ENCODE measurements at regions of chr2 and their contacts with region 1.

Region 1: GRCh38 chr2:128321784-128322714 is 3.4 kb upstream of the HS6ST1 start:
- DNase-seq: peak; percentile 69 to 83 (median 78)
- H3K4me3 ChIP-seq: peak overlapping the region in 1 of 2 donors; percentile 58
- H3K4me3 Mint-ChIP-seq: peak overlapping the region; percentile 65 to 82 (median 76)
- H3K27ac ChIP-seq: peak overlapping the region; percentile 30
- H3K27ac Mint-ChIP-seq: peak overlapping the region in 4 of 7 donors; percentile 69 to 90 (median 77)
- H3K4me1 ChIP-seq: peaks cover 19% of the 10 kb centered on the region
- H3K4me1 Mint-ChIP-seq: peaks cover 6 to 21% (median 14%) of the 10 kb centered on the region in 4 donors
- H3K27me3 ChIP-seq: no peaks in the 10 kb centered on the region
- H3K27me3 Mint-ChIP-seq: no peaks in the 10 kb centered on the region

Region 2: GRCh38 chr2:128090945-128091725 is 230.9 kb before region 1 on chr2 and contains the start of gene UGGT1:
- CTCF ChIA-PET with region 1: no interaction called
- POLR2A ChIA-PET with region 1: no interaction called
- intact Hi-C with region 1: loop called (anchors 10 kb)
- DNase-seq: peak; percentile 91 to 95 (median 93)
- H3K4me3 ChIP-seq: peak within 1 kb of the TSS; percentile 86 to 98
- H3K4me3 Mint-ChIP-seq: peak within 1 kb of the TSS; percentile 88 to 98 (median 93)
- H3K27ac ChIP-seq: peak within 1 kb of the TSS; percentile 81
- H3K27ac Mint-ChIP-seq: peak within 1 kb of the TSS; percentile 90 to 98 (median 96)
- H3K4me1 ChIP-seq: peaks cover 33% of the 10 kb centered on the region
- H3K4me1 Mint-ChIP-seq: peaks cover 27 to 61% (median 40%) of the 10 kb centered on the region in 4 donors
- H3K27me3 ChIP-seq: no peaks in the 10 kb centered on the region
- H3K27me3 Mint-ChIP-seq: no peaks in the 10 kb centered on the region
- total RNA-seq, gene UGGT1: 56.8 to 60.2 TPM

Region 3: DNA sequence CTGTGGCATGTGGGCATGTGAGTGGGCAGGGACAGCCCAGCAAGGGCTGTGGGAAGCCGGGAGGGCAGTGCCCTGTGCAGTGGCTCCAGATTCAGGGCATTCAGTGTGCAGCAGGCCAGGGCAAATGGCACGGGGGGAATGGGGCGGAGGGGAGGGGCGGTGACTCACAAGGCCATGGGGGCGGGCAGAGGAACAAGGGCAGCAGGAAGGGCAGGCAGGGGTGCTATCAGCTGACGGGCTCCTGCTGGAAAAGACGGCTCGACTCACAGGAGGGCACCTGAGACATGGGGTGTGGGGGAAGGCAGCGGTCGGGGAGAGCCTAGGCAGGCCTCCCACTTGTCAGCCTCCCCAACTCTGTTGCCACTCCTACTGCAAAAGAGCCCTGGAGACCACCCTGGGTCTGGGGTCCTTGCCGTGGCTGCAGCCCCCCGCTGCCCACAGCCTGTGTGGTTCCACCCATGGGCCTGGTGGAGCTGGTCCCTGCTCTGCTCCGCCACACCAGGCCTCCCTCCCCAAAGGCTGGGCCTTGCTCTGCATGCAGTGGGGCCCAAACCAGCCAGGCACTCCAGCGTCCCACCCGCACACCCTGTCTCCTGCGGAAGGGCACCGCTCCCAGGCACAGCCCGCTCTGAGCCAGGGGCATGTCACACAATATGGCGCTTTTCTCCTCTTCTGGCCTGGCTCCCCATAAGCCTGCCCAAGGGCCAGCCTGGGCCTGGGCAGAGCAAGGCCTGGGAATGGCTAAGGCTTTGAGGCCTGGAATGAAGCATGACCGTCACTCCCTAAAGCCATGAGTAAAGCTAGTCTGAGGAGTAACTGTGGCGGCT is 29.2 kb before region 1 on chr2:
- CTCF ChIA-PET with region 1: no interaction called
- POLR2A ChIA-PET with region 1: no interaction called
- intact Hi-C with region 1: no loop called
- DNase-seq: peak in 1 of 5 donors; percentile 19
- H3K4me3 ChIP-seq: no peak overlapping the region
- H3K4me3 Mint-ChIP-seq: no peak overlapping the region
- H3K27ac ChIP-seq: no peak overlapping the region
- H3K27ac Mint-ChIP-seq: peak overlapping the region in 1 of 7 donors; percentile 12
- H3K4me1 ChIP-seq: no peaks in the 10 kb centered on the region
- H3K4me1 Mint-ChIP-seq: peaks cover 0 to 8% (median under 1%) of the 10 kb centered on the region in 4 donors
- H3K27me3 ChIP-seq: no peaks in the 10 kb centered on the region
- H3K27me3 Mint-ChIP-seq: no peaks in the 10 kb centered on the region

Region 4: DNA sequence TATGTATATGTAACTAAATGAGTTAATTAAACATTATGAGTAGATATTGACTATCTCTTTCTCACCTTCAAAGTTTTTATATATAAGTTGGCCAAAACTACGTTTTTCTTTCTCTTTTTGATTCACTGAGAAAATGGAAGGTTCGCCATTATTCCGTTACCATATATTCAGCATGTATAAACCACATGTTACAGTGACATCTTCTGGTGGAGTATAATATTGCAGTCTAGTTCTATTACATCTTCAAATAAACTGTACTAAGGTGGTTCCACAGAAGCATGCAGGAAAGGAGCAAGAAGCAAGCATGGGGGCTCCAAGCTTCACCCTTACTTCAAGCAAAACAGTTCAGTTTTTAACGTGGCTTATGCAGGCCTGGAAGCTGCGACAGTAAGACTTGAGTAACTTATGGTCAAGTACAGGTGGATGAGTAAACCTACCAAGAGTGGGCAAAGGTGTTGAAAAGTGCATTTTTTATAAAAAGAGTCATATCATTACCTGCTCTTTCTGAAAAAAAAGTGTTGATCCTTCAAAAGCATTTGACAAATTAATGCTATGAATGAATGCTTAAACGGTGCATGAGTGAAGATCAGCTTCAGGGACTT is 1527.6 kb after region 1 on chr2:
- CTCF ChIA-PET with region 1: no interaction called
- POLR2A ChIA-PET with region 1: no interaction called
- intact Hi-C with region 1: loop called (anchors 5 kb)
- DNase-seq: peak in 4 of 5 donors; percentile 54 to 64 (median 56)
- H3K4me3 ChIP-seq: no peak overlapping the region
- H3K4me3 Mint-ChIP-seq: peak overlapping the region in 1 of 8 donors; percentile 43
- H3K27ac ChIP-seq: no peak overlapping the region
- H3K27ac Mint-ChIP-seq: no peak overlapping the region
- H3K4me1 ChIP-seq: no peaks in the 10 kb centered on the region
- H3K4me1 Mint-ChIP-seq: peaks cover 0 to 3% (median 1%) of the 10 kb centered on the region in 4 donors
- H3K27me3 ChIP-seq: peaks cover 4% of the 10 kb centered on the region
- H3K27me3 Mint-ChIP-seq: peaks cover 6 to 18% of the 10 kb centered on the region in 2 donors